GM10248 (cell line): ENCODE measurements at regions of chr14 and their contacts with region 1.

Region 1: GRCh38 chr14:102316743-102317563 is 2.6 kb upstream of the ZNF839 start:
- DNase-seq: peak; percentile 93
- CTCF ChIP-seq: peak; percentile 95

Region 2: DNA sequence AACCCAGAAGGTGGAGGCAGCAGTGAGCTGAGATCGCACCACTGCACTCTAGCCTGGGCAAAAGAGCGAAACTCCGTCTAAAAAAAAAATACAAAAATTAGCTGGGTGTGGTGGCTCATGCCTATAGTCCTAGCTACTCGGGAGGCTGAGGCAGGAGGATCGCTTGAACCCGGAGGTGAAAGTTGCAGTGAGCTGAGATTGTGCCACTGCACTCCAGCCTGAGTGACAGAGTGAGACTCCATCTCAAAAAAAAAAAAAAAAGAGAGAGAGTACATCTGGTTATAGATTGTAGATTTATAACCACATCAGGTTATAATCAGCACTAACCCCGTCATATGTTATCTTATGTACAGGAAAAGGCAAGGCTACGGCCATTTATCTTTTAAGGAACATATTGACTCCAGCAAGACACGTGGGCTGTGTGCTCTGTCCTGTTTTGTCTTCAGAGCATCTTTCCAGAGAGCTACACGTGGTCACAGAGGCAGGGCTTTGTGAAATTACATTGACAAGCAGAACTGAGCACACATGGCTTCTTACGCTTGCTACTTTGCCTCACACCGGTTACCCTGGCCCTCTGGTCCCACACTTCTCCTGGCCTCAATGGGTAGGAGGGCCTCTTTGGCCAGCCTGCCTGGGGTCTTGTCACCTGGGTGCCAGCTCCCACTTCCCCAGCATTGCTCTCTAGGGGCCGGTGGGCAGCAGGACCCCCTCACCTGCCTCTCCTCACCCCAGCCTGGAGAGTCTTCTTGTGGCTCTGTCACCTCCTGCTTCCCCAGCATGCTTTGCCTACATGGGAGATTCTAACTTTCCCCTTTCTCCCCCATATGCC is 359.3 kb before region 1 on chr14:
- CTCF ChIA-PET with region 1: interaction called, 14 read pairs
- POLR2A ChIA-PET with region 1: no interaction called
- DNase-seq: no peak
- CTCF ChIP-seq: no peak

Region 3: DNA sequence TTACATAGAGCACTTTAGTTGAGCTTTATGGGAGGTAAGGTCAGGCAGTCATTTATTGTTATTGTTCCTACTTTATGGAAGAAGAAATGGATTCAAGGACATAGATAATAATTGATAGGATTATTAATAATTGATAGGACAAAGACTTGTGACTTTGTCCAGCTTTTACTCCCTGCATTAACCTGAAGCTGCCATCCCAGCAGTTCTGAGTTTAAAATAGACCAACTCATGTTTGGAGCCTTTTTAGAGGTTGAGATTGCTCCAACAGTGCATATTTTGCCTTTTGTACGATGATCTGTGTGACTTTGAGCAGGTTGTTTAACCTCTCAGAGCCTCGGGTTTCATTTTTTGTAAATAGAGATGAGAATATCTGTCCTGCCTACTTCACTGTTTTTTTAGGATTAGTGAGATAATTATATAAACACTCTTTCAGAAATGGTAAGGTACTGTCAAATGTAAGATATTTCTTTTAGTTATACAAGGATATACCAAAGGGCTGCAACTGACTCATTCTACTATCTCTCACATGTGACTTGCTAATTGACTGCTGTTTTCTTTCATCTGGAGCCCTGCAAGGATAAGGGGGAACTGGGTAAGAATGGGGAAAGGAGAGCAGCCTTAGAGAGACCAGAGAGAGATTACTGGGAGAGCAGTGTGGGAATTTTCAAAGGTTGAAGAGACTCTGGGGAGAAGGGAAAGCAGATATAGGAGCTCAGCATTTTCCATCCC is 162.0 kb before region 1 on chr14:
- CTCF ChIA-PET with region 1: no interaction called
- POLR2A ChIA-PET with region 1: no interaction called
- DNase-seq: no peak
- CTCF ChIP-seq: no peak

Region 4: GRCh38 chr14:102231476-102232347 is 85.2 kb before region 1 on chr14:
- CTCF ChIA-PET with region 1: interaction called, 10 read pairs
- POLR2A ChIA-PET with region 1: no interaction called
- DNase-seq: no peak
- CTCF ChIP-seq: no peak

Region 5: DNA sequence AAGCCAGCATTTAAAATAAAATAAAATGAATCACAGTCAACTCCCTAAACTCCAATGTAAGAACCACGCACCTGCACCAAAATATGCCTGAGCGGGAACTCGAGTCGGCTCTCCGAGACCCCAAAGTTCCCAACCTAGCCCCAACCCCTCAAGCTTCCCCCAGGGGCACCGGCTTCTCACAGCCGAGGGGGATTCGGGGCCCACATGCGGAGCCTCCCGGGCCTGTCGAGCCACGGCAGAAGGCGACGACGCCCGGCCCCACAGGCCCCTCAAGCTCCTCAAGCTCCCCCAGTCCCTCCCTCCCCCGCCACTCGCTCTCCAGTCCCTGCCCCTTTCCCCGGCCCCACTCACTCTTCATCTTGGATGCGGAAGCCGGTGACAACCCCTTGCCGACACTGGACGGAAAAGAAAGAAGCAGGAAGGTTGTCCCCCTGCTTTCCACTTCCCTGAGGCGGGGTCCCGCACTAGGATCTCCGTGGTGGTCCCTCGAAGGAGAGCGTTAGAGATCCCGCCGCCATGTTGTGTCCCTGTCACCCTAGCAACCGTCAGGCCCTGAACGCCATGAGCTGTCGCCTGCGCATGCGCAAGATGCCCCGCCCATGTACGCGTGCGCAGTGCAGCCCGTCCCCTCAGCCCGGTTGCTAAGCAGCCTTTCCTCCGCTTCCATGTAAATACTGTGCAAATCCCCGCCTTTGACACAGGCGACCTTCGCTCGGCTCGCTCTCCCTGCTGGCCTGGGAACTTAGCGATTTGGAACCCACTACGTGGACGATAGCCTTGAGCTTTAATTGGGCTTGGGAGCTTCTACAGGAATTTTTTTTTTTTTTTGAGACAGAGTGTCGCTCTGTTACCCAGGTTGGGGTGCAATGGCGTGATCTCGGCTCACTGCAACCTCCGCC is 12.1 kb before region 1 on chr14 and contains the start of gene MOK:
- CTCF ChIA-PET with region 1: interaction called, 37 read pairs
- POLR2A ChIA-PET with region 1: interaction called, 7 read pairs
- DNase-seq: peak; percentile 98
- CTCF ChIP-seq: no peak